PC-9 (cell line): ENCODE measurements at regions of chr17 and their contacts with region 1.

Region 1: DNA sequence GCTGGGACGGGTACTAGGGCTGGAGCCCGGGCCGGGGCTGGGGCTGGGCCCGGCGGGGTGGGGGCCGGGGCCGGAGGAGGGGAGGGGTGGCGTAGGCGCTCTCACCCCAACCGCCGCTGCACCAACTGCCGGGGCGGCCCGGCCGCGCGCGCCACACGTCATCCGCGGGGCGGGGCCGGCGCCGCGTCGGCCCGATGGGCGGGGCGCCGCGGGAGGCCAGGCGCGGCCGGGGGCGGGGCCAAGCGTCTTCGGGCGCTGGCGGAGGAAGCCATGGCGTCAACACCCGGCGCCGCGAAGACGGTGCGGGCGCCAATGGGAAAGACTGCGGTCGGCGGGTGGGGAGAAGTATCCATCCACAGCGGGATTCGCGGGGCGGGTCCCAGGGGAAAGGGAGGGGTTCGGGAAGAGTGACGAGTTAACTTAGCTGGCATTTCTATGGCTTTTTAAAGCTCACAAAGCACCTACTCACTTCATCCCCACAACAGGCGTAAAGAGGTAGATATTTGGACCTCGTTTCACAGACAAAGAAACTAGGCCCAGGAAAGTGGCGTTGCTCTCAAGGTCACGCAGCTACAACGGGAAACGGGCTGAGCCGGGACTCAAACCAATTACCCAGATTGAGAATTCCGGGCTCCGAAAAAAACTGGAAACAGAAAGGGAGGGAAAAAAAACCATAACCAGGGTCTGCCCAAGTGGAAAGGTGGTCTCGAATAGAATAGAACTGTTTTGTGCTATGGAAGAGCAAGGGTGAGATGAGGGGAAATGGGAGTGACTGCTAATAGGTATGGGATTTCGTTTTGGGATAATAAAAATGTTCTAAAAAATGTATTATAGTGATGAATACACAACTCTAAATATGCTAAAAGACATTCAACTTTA is at the start of gene SPAG9:
- DNase-seq: peak; percentile 90 to 96
- H3K4me3 ChIP-seq: peak within 1 kb of the TSS; percentile 95
- H3K27ac ChIP-seq: peak within 1 kb of the TSS; percentile 98
- H3K4me1 ChIP-seq: peaks cover 29% of the 10 kb centered on the region
- H3K27me3 ChIP-seq: no peaks in the 10 kb centered on the region
- CTCF ChIP-seq: no peak
- total RNA-seq, gene SPAG9: 40.8 and 51.8 TPM in 2 replicates

Region 2: DNA sequence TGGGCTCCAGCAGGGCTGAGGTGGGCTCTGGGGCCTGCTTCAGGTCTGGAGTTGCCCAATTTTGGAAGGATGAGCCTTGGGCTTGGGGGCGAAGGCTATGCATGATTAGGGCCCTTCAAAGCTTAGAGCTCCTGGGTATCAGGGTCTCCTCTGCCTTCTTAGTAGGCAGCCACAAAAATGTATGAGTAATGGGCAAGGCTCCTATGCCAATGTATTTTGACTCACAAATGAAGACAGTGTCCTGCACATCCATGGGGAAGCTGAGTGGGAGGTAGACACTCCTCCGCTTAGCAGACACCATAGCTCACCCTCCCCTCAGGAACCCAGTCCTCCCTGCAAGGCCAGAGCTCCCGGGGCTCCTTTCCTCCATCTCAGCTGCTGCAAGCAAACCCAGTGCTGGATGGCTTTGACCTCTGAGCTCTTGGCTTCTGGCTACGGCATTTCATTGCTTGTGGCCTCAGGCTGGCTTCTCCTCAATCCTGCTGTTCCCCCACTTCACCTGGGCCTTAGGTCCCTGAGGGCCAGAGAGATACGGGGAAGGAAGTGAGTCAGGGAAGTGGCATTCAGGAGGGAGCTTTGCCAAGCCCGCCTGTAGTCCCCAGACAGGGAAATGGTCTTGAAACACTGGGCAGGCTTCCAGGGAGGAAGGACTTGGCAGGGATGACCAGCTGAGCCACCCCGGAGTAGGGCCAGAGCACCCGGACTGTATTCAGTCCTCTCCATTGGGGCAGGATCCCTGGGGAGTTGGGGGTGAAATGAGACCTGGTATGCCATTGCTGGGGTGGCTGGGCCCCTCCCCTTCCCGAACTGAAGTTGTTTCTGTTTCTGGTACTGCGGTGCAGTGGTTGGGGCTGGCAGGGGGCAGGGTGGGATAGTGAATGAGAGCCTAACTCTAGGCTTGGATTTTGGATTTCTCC is 481.9 kb before region 1 on chr17:
- CTCF ChIA-PET with region 1: no interaction called
- POLR2A ChIA-PET with region 1: interaction called, 19 read pairs
- intact Hi-C with region 1: no loop called
- DNase-seq: peak; percentile 97 to 100
- H3K4me3 ChIP-seq: peak overlapping the region; percentile 81; the same call in 1 of the 2 replicates
- H3K27ac ChIP-seq: peak overlapping the region; percentile 91
- H3K4me1 ChIP-seq: peaks cover 78% of the 10 kb centered on the region
- H3K27me3 ChIP-seq: no peaks in the 10 kb centered on the region
- CTCF ChIP-seq: no peak

Region 3: GRCh38 chr17:51153210-51154072 is 32.5 kb after region 1 on chr17 and contains the start of gene NME1:
- CTCF ChIA-PET with region 1: interaction called, 4 read pairs
- POLR2A ChIA-PET with region 1: interaction called, 8 read pairs
- intact Hi-C with region 1: loop called (anchors 1 kb)
- DNase-seq: peak; percentile 96 to 99
- H3K4me3 ChIP-seq: peak within 1 kb of the TSS; percentile 72
- H3K27ac ChIP-seq: peak within 1 kb of the TSS; percentile 78
- H3K4me1 ChIP-seq: peaks cover 22% of the 10 kb centered on the region
- H3K27me3 ChIP-seq: no peaks in the 10 kb centered on the region
- CTCF ChIP-seq: peak; percentile 86
- total RNA-seq, gene NME1: 115 and 172 TPM in 2 replicates

Region 4: GRCh38 chr17:51260125-51260880 is 139.3 kb after region 1 on chr17 and contains the start of gene UTP18:
- CTCF ChIA-PET with region 1: no interaction called
- POLR2A ChIA-PET with region 1: no interaction called
- intact Hi-C with region 1: loop called (anchors 2 kb)
- DNase-seq: peak; percentile 93
- H3K4me3 ChIP-seq: peak within 1 kb of the TSS; percentile 94
- H3K27ac ChIP-seq: peak within 1 kb of the TSS; percentile 92
- H3K4me1 ChIP-seq: peaks cover 55% of the 10 kb centered on the region
- H3K27me3 ChIP-seq: no peaks in the 10 kb centered on the region
- CTCF ChIP-seq: no peak
- total RNA-seq, gene UTP18: 26.4 and 31.8 TPM in 2 replicates